ENCODE measurements at regions of chrX and their contacts with region 1.

Region 1: DNA sequence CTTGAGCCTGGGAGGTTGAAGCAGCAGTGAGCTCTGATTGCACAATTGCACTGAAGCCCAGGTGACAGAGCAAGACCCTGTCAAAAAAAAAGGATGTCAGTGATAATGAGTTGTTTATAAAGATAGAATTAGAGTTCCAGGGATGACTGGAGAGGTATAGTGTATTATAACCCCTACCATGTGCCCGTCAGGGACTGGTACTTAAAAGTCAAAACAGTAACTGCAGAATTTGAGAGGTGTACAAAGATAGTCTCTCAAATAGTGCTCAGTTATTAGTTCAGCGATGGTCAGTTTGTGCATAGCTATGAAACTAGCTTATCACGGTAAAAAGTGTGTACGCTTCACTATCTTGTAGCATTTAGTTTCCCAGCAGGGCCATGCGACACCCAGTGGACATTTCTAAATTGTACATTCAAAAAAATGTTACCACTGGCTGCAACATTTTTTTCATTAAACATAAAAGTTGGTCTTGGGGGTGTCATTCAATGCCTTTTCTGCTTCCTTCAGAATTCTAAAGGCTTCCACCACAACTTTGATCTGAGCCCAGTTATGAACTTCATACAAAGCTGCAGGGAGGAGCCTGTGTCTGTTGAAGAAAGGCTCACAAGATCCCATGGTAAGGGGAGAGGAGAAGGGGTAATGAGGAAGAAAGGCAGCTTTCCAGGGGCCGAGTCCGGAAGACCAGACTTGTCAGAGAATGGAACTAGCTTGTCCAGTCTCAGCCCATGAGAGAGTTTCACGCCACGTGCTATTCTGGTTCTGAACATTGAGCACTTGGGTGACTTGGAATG is 9.2 kb upstream of the GYG2 start:
- DNase-seq: no peak
- ATAC-seq: no peak

Region 2: DNA sequence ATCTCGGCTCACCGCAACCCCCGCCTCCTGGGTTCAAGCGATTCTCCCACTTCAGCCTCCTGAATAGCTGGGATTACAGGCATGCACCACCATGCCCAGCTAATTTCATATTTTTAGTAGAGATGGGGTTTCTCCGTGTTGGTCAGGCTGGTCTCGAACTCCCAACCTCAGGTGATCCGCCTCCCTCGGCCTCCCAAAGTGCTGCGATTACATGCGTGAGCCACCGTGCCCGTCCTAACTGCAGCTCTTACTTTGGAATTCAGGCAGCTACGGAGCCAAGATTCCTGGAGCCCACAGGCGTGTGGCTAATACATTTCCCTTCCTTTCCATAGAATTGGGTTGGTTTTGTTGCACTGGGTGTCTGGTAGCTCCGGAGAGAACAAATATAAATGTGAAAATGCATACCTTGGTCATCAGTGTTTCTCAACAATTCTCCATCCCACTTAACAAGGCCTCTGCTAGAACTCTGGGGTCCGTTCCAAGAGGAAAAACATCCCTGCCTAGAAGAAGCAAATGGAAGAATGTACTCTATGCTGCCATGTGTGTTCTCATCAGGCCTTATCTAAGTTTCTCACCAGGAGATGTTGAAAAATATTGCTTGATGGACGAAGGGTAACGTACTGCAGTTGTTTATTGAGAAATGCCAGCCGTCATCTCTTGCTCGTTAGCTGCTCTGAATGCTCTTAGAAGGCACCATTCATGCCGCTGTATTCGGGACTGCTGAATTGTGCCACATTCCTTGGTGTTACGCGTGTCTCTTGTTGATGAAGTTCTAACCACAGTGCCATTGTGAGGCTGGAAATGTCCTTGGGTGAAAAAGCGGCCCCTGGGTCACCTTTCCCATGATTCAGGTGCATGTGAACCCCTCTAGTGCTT is 179.0 kb before region 1 on chrX:
- intact Hi-C with region 1: loop called (anchors 10 kb)
- DNase-seq: no peak
- ATAC-seq: no peak

Region 3: DNA sequence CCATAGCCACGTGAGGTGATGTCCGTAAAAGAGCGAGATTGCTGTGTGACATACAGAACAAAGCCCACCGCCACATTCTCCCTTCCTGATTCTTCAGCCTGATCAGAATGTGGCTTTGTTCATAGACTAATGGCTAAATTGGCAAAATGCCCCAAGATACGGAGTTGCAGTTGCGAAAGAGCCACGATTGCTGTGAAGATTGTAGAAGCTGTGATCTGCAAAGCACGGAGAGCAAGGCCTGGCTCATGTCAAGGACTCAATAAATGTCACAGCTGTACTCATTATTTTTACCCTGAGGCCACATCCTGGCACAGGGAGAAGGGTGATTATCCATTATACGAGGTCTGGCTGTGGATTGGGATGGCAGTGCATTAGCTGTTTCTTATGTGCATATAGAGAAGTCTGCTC is 75.3 kb after region 1 on chrX:
- intact Hi-C with region 1: no loop called
- DNase-seq: no peak
- ATAC-seq: no peak

Region 4: DNA sequence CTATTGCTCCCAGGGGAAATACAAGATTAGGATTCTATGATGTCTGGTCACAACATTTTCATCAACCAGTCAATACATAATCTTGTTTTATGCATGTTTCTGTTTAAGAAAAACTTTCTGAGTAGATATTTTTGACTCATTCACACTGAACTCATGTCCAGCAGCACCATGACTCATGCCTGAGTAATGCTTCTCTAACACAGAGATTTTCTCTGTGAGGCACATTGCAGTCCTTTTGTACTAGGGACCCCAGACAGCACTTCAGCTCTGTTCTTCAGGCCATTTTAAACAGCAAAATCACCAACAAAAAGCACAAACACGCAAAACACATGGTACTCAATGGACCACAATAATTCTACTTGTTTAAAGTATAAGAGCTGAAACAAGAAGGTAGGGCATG is 443.4 kb after region 1 on chrX:
- intact Hi-C with region 1: no loop called
- DNase-seq: no peak
- ATAC-seq: peak; percentile 59

Region 5: GRCh38 chrX:3763111-3763510 is 943.6 kb after region 1 on chrX:
- intact Hi-C with region 1: no loop called
- DNase-seq: no peak
- ATAC-seq: no peak

Measured in left ventricle myocardium superior (tissue), 1 donor.